OCI-LY7 (cell line): ENCODE measurements at regions of chr10 and their contacts with region 1.

Region 1: GRCh38 chr10:92757066-92757710 is 67.4 kb downstream of the HHEX start:
- DNase-seq: peak; percentile 95
- H3K4me3 ChIP-seq: peak overlapping the region; percentile 58
- H3K27ac ChIP-seq: peak overlapping the region; percentile 96
- H3K4me1 ChIP-seq: peaks cover 68% of the 10 kb centered on the region
- CTCF ChIP-seq: peak; percentile 73

Region 2: GRCh38 chr10:92464364-92464763 is 292.8 kb before region 1 on chr10:
- CTCF ChIA-PET with region 1: no interaction called
- POLR2A ChIA-PET with region 1: no interaction called
- intact Hi-C with region 1: no loop called
- DNase-seq: no peak
- H3K4me3 ChIP-seq: no peak overlapping the region
- H3K27ac ChIP-seq: no peak overlapping the region
- H3K4me1 ChIP-seq: no peaks in the 10 kb centered on the region
- CTCF ChIP-seq: no peak

Region 3: DNA sequence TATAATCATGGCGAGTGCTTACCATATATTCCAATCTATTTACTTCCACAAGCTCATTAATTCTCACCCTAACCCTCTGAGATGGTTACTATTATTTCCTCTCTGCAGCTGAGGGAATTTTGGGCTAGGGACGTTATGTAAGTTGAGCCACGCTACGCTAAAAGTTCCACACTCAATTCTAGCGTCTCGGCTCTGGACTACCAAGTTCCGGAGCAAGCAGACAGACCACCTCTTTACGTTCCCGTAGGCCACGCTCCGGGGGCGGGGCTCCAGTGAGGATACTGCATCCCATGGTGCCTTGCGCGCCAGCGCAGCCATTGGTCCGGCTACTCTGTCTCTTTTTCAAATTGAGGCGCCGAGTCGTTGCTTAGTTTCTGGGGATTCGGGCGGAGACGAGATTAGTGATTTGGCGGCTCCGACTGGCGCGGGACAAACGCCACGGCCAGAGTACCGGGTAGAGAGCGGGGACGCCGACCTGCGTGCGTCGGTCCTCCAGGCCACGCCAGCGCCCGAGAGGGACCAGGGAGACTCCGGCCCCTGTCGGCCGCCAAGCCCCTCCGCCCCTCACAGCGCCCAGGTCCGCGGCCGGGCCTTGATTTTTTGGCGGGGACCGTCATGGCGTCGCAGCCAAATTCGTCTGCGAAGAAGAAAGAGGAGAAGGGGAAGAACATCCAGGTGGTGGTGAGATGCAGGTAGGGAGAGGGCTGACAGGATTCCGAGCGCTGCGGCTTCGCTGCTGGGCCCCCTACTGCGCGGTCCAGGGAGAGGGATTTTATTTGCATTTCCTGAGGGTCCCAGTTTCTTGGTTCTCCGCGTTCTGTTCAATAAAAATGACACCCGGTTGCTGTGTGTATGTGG is 164.2 kb before region 1 on chr10 and contains the start of gene KIF11:
- CTCF ChIA-PET with region 1: interaction called, 4 read pairs
- POLR2A ChIA-PET with region 1: interaction called, 10 read pairs
- intact Hi-C with region 1: loop called (anchors 1 kb)
- DNase-seq: peak; percentile 99
- H3K4me3 ChIP-seq: peak within 1 kb of the TSS; percentile 96
- H3K27ac ChIP-seq: peak within 1 kb of the TSS; percentile 93
- H3K4me1 ChIP-seq: peaks cover 40% of the 10 kb centered on the region
- CTCF ChIP-seq: peak; percentile 36; the same call in 1 of the 2 replicates
- total RNA-seq, gene KIF11: 71.8 and 72.7 TPM in 2 replicates

Region 4: DNA sequence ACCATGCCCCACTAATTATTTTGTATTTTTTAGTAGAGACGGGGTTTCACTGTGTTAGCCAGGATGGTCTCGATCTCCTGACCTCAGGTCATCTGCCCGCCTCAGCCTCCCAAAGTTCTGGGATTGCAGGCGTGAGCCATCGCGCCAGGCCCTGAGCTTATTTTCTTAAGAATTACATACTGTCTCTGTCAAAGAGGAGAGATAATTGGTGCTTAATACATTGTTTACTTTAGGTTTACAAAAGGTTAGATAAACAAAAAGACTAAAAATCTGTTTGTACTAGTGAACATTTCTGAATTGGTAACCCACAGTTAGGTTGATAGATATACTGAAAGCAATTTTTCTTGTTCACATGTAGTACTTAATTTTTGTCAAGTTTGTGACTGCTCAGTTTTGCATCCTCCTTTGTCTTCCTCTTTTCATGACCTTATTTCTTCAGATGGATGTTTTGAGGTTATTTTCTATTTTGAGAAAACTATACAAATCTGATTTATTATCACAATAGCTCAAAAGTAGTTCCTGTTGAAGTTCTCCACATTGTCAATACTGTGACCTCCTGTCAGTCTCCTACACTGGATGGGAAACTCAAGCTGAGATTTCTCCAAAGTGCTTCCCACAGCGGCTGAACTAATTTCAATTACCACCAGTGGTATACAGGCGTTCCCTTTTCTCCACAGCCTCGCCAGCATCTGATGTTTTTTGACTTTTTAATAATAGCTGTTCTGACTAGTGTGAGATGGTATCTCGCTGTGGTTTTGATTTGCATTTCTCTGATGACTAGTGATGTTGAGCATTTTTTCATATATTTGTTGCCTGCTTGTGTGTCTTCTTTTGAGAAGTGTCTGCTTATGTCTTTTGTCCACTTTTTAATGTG is 44.9 kb before region 1 on chr10:
- CTCF ChIA-PET with region 1: no interaction called
- POLR2A ChIA-PET with region 1: interaction called, 16 read pairs
- intact Hi-C with region 1: loop called (anchors 1 kb)
- DNase-seq: peak; percentile 30
- H3K4me3 ChIP-seq: peak overlapping the region; percentile 30
- H3K27ac ChIP-seq: peak overlapping the region; percentile 42
- H3K4me1 ChIP-seq: peaks cover 44% of the 10 kb centered on the region
- CTCF ChIP-seq: no peak

Region 5: GRCh38 chr10:92742331-92743228 is 14.6 kb before region 1 on chr10:
- CTCF ChIA-PET with region 1: interaction called, 4 read pairs
- POLR2A ChIA-PET with region 1: interaction called, 32 read pairs
- intact Hi-C with region 1: loop called (anchors 1 kb)
- DNase-seq: peak; percentile 95
- H3K4me3 ChIP-seq: peak overlapping the region; percentile 53
- H3K27ac ChIP-seq: peak overlapping the region; percentile 91
- H3K4me1 ChIP-seq: peaks cover 53% of the 10 kb centered on the region
- CTCF ChIP-seq: no peak

Region 6: GRCh38 chr10:92787557-92788152 is 30.5 kb after region 1 on chr10:
- CTCF ChIA-PET with region 1: no interaction called
- POLR2A ChIA-PET with region 1: interaction called, 4 read pairs
- intact Hi-C with region 1: loop called (anchors 1 kb)
- DNase-seq: peak; percentile 84
- H3K4me3 ChIP-seq: peak overlapping the region; percentile 13
- H3K27ac ChIP-seq: peak overlapping the region; percentile 66
- H3K4me1 ChIP-seq: peaks cover 49% of the 10 kb centered on the region
- CTCF ChIP-seq: peak; percentile 47; the same call in 1 of the 2 replicates

Region 7: GRCh38 chr10:92839191-92840085 is 82.2 kb after region 1 on chr10:
- CTCF ChIA-PET with region 1: no interaction called
- POLR2A ChIA-PET with region 1: no interaction called
- intact Hi-C with region 1: no loop called
- DNase-seq: peak; percentile 59
- H3K4me3 ChIP-seq: no peak overlapping the region
- H3K27ac ChIP-seq: no peak overlapping the region
- H3K4me1 ChIP-seq: no peaks in the 10 kb centered on the region
- CTCF ChIP-seq: peak; percentile 93